Endothelial cell of umbilical vein (primary cell): ENCODE measurements at regions of chr6 and their contacts with region 1.

Region 1: GRCh38 chr6:145633981-145634627 is 101.2 kb downstream of the EPM2A start:
- DNase-seq: peak; percentile 78
- H3K4me3 ChIP-seq: no peak overlapping the region
- H3K27ac ChIP-seq: no peak overlapping the region
- H3K4me1 ChIP-seq: no peaks in the 10 kb centered on the region
- H3K27me3 ChIP-seq: no peaks in the 10 kb centered on the region
- CTCF ChIP-seq: peak; percentile 78 to 89
- POLR2A ChIP-seq: no peak

Region 2: GRCh38 chr6:144582939-144583613 is 1051.0 kb before region 1 on chr6:
- CTCF ChIA-PET with region 1: no interaction called
- POLR2A ChIA-PET with region 1: no interaction called
- dilution Hi-C with region 1: no loop called
- intact Hi-C with region 1: loop called (anchors 5 kb)
- DNase-seq: no peak
- H3K4me3 ChIP-seq: no peak overlapping the region
- H3K27ac ChIP-seq: no peak overlapping the region
- H3K4me1 ChIP-seq: peaks cover 7% of the 10 kb centered on the region
- H3K27me3 ChIP-seq: no peaks in the 10 kb centered on the region
- CTCF ChIP-seq: no peak
- POLR2A ChIP-seq: no peak

Region 3: GRCh38 chr6:145112711-145113151 is 521.4 kb before region 1 on chr6:
- CTCF ChIA-PET with region 1: no interaction called
- POLR2A ChIA-PET with region 1: no interaction called
- dilution Hi-C with region 1: no loop called
- intact Hi-C with region 1: no loop called
- DNase-seq: no peak
- H3K4me3 ChIP-seq: no peak overlapping the region
- H3K27ac ChIP-seq: no peak overlapping the region
- H3K4me1 ChIP-seq: no peaks in the 10 kb centered on the region
- H3K27me3 ChIP-seq: peaks cover 1 to 4% of the 10 kb centered on the region in 2 experiments
- CTCF ChIP-seq: no peak
- POLR2A ChIP-seq: no peak

Region 4: DNA sequence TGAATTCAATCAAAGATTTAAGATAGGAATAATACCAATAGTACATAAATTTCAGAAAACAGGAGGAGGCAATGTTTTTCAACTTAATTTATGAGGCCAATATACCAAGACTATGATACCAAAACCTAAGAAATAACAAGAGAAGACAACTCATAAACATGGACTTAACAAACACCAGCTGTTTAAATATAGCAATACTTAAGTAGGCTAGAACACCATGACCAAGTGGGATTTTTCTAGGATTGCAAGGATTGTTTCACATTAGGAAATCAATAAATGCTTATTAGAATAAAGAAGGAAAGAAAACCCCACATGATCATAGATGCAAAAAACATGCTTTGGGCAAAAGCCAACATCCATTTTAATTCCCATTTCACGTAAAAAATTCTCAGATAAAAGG is 253.9 kb before region 1 on chr6:
- CTCF ChIA-PET with region 1: no interaction called
- POLR2A ChIA-PET with region 1: no interaction called
- dilution Hi-C with region 1: no loop called
- intact Hi-C with region 1: no loop called
- DNase-seq: no peak
- H3K4me3 ChIP-seq: no peak overlapping the region
- H3K27ac ChIP-seq: no peak overlapping the region
- H3K4me1 ChIP-seq: no peaks in the 10 kb centered on the region
- H3K27me3 ChIP-seq: no peaks in the 10 kb centered on the region
- CTCF ChIP-seq: no peak
- POLR2A ChIP-seq: no peak

Region 5: GRCh38 chr6:145602726-145603326 is 31.3 kb before region 1 on chr6:
- CTCF ChIA-PET with region 1: interaction called, 12 read pairs
- POLR2A ChIA-PET with region 1: no interaction called
- dilution Hi-C with region 1: no loop called
- intact Hi-C with region 1: no loop called
- DNase-seq: no peak
- H3K4me3 ChIP-seq: no peak overlapping the region
- H3K27ac ChIP-seq: no peak overlapping the region
- H3K4me1 ChIP-seq: no peaks in the 10 kb centered on the region
- H3K27me3 ChIP-seq: no peaks in the 10 kb centered on the region
- CTCF ChIP-seq: no peak
- POLR2A ChIP-seq: no peak

Region 6: DNA sequence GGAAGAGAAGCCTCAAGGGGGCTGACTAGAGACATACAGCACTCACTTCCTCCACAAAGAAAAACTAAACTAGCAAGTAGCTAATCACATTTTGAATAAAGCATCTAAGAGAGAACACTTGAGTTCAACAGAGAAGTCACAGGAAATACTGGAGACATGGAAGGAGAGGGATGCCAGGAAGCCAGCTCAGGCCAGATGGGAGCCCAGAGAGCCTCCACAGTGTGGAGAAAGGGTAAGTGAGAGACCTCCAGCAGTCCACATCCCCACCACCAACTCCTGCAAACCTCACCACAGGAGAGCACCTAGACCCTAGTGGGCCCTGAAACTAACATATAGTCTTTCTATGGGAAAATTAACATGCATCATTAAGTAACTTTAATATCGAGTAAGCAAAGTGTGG is 22.0 kb after region 1 on chr6:
- CTCF ChIA-PET with region 1: interaction called, 29 read pairs
- POLR2A ChIA-PET with region 1: no interaction called
- dilution Hi-C with region 1: no loop called
- intact Hi-C with region 1: no loop called
- DNase-seq: peak; percentile 8
- H3K4me3 ChIP-seq: no peak overlapping the region
- H3K27ac ChIP-seq: peak overlapping the region; percentile 18
- H3K4me1 ChIP-seq: peaks cover 7% of the 10 kb centered on the region
- H3K27me3 ChIP-seq: no peaks in the 10 kb centered on the region
- CTCF ChIP-seq: no peak
- POLR2A ChIP-seq: no peak

Region 7: DNA sequence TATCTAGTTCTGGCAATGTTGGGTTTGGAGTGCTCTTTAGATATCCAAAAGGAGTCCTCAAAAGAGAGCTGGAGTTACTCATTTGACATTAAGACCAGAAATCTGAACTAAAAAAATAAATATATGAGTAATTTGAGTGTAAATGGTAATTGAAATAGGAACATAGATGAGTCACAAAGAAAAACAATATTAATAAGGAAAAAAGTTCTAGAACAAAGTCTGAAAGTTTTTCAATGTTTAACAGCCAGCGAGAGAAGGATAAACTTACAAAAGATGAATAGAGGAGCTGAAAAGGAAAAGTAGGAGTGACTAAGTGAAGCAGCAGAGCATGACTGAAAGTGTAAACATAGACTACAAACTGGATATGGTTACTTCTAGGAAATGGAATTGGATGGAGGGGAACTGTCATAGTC is 54.4 kb after region 1 on chr6:
- CTCF ChIA-PET with region 1: interaction called, 18 read pairs
- POLR2A ChIA-PET with region 1: no interaction called
- dilution Hi-C with region 1: no loop called
- intact Hi-C with region 1: no loop called
- DNase-seq: peak; percentile 71
- H3K4me3 ChIP-seq: no peak overlapping the region
- H3K27ac ChIP-seq: peak overlapping the region; percentile 43
- H3K4me1 ChIP-seq: peaks cover 21% of the 10 kb centered on the region
- H3K27me3 ChIP-seq: no peaks in the 10 kb centered on the region
- CTCF ChIP-seq: no peak
- POLR2A ChIP-seq: no peak

Region 8: DNA sequence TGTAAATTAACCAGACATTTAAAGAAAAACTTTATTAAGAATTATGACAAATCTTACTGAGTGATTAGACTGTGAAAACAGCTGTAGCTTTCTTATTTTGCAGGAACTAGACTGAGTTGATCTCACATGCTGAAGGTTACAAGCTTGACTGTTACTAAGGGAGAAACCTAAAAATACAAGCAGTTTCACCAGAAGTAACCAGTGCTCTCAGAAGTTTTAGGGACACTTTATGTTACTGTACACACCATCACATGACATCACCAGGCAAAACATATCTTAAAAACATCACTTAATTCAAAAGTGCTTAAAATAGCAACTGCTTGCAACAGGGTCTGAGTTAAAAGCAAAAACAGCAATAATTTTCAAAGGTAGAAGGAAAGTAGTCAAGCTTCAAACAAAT is 175.1 kb after region 1 on chr6:
- CTCF ChIA-PET with region 1: no interaction called
- POLR2A ChIA-PET with region 1: no interaction called
- dilution Hi-C with region 1: no loop called
- intact Hi-C with region 1: no loop called
- DNase-seq: no peak
- H3K4me3 ChIP-seq: no peak overlapping the region
- H3K27ac ChIP-seq: no peak overlapping the region
- H3K4me1 ChIP-seq: peaks cover 20% of the 10 kb centered on the region
- H3K27me3 ChIP-seq: no peaks in the 10 kb centered on the region
- CTCF ChIP-seq: no peak
- POLR2A ChIP-seq: no peak